ENCODE measurements at regions of chr1 and their contacts with region 1.

Region 1: DNA sequence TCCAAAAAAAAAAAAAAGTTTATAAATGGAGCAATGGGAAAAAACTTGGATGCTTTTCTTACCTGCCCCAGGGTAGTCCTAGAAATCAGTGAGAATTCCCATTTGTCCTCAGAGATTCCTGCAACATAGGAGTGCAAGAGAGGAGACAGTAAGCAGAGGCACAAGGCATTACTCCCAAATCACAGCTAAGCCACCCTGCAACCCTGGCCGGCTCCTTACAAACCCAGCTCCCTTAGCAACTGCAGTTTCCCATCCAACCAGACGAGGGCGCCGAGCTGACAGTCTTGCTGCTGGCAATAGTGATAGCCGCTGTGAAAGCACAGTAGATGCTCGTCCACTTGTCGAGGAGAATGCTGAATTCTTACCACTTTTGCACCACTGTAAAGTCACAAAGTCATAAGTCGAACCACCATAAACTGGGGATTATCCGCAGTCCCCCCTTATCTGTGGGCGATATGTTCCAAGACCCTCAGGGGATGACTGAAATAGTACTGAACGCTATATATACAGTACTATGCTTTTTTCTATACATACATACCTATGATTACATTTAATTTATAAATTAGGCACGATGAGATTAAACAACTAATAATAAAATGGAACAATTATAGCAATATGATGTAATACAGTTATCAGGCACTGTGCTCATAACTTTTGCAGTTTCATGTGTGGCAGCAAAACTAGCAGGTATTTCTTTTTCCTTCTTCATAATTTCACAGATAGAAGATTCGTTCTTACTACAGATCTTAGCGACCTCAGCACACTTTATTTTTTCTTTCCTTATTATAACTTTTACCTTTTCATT is 6.0 kb upstream of the PITHD1 start:
- DNase-seq: peak; percentile 81
- H3K4me3 ChIP-seq: no peak overlapping the region
- H3K27ac ChIP-seq: no peak overlapping the region
- H3K4me1 ChIP-seq: peaks cover 2% of the 10 kb centered on the region
- H3K27me3 ChIP-seq: no peaks in the 10 kb centered on the region
- CTCF ChIP-seq: peak; percentile 94 to 97
- POLR2A ChIP-seq: no peak

Region 2: DNA sequence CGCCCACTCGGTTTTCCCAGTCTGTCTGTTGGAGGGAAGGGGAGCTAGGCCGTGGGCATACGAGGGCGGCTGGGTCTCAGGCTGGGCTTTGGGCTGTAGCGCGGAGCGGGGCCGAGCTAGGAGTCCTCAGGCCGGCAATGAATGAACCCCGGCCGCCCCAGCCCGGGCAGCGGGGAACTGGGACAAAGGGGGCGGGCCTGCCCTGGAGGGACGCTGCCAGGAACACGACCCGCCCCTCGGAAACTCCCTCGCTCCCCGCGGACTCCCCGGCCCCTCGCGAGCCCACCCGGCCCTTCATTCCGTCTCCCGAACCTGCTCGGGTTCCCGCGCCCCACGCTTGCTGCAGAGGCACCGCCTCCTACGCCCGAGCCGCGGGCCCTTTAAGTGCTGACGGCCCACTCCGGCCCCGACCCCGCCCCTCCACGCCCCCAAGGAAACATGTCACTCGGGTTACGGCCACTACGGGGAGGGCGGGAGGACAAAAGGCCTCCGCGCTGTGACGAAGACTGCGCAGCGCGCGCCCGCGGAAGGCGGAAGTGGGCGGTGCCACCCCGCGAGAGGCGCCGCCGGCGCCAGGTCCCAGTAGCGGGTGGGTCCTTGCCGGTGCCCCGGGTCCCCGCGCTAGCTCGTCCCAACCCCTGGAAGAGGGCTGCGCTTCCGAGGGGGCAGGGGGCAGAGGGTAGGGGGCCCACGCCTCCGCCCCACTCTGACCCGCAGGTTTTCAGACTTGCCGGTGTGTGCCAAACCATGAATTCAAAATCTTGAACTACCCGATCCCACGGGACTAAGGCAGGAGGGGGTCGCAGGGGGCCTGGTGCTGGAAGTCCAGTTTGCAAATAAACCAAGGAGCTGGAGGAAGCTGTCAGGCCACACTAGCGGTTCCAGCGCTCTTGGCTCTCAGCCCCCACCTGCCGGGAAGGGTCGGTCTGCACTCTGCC is 28.4 kb after region 1 on chr1 and contains the start of gene GALE:
- CTCF ChIA-PET with region 1: interaction called, 43 read pairs
- POLR2A ChIA-PET with region 1: no interaction called
- dilution Hi-C with region 1: no loop called
- intact Hi-C with region 1: loop called (anchors 1 kb)
- DNase-seq: peak; percentile 95
- H3K4me3 ChIP-seq: peak within 1 kb of the TSS; percentile 45 to 83 (median 73)
- H3K27ac ChIP-seq: peak within 1 kb of the TSS; percentile 62
- H3K4me1 ChIP-seq: peaks cover 15% of the 10 kb centered on the region
- H3K27me3 ChIP-seq: no peaks in the 10 kb centered on the region
- CTCF ChIP-seq: no peak
- POLR2A ChIP-seq: peak; percentile 61
- total RNA-seq, gene GALE: 39.2 and 42.9 TPM in 2 replicates

Region 3: DNA sequence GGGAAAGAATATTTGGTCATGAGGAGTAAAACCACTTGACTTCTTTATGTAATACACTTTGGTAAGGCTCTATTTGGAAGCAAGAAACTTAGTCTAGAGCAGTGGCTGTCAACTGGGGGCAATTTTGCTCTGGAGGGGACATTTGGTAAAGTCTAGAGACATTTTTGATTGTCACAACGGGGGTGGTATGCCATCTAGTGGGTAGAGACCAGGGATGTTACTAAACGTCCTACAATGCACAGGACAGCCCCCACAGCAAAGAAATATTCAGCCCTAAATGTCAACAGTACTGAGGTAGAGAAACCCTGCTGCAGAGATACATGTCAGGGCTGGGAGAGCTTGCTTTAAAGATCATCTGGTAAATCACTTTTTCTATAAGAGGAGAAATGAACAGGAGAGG is 82.3 kb after region 1 on chr1:
- CTCF ChIA-PET with region 1: interaction called, 48 read pairs
- POLR2A ChIA-PET with region 1: no interaction called
- dilution Hi-C with region 1: no loop called
- intact Hi-C with region 1: loop called (anchors 1 kb)
- DNase-seq: peak; percentile 16
- H3K4me3 ChIP-seq: no peak overlapping the region
- H3K27ac ChIP-seq: no peak overlapping the region
- H3K4me1 ChIP-seq: no peaks in the 10 kb centered on the region
- H3K27me3 ChIP-seq: no peaks in the 10 kb centered on the region
- CTCF ChIP-seq: peak; percentile 19 to 31
- POLR2A ChIP-seq: no peak

Region 4: GRCh38 chr1:23916209-23917131 is 144.2 kb after region 1 on chr1:
- CTCF ChIA-PET with region 1: interaction called, 68 read pairs
- POLR2A ChIA-PET with region 1: no interaction called
- dilution Hi-C with region 1: no loop called
- intact Hi-C with region 1: no loop called
- DNase-seq: peak; percentile 44
- H3K4me3 ChIP-seq: no peak overlapping the region
- H3K27ac ChIP-seq: no peak overlapping the region
- H3K4me1 ChIP-seq: no peaks in the 10 kb centered on the region
- H3K27me3 ChIP-seq: no peaks in the 10 kb centered on the region
- CTCF ChIP-seq: peak; percentile 26 to 46
- POLR2A ChIP-seq: no peak

Measured in endothelial cell of umbilical vein (primary cell).